ENCODE measurements at regions of chr11 and their contacts with region 1.

Region 1: DNA sequence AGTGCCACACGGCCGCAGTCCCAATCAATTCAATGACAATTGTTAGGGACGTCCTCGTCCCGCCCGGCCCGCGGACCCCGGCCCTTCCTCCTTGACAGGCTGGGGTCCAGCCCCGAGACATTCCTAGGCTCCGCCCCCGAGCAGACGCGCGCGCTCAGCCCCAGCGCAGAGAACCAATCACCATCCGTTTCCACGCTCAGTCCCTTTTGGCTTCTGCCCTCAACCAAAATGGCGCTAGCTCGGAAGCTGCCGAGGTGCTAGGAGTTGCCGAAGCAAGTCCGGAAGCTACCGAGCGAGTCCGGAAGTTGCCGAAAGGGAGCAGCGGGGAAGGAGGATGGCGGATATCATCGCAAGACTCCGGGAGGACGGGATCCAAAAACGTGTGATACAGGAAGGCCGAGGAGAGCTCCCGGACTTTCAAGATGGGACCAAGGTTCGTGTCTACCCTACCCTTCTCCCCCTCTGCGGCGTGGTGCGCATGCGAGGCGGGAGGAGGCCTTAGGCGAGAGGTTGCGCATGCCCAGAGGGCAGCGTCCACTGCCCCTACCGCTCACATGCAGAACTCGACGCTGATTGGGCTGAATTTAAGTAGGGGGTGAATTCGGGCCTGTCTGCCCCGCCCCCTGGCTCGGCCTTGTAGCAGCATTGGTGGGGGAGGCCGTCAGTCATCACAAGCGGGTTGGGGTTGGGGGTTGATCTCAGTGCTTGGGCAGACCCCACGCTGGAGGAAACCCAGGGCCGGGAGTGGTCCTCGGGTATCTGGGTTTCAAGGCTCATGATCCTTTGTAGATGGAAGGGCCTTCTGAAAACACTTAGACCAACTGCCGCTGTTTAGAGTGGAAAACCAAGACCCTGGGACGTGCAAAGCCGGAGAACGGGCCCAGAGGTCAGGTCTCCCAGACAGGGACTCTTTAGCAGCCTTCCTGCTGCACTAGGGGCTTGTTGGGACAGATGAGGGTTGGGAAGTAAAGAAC is at the start of gene AIP:
- DNase-seq: peak; percentile 99
- total RNA-seq, gene AIP: 43.6 TPM

Region 2: GRCh38 chr11:67401495-67402191 is 81.5 kb before region 1 on chr11 and contains the start of gene PPP1CA:
- intact Hi-C with region 1: loop called (anchors 1 kb)
- DNase-seq: peak; percentile 97
- total RNA-seq, gene PPP1CA: 95.1 TPM

Region 3: GRCh38 chr11:67563354-67564114 is 80.4 kb after region 1 on chr11:
- intact Hi-C with region 1: no loop called
- DNase-seq: no peak